WTC11 (cell line): ENCODE measurements at regions of chr9 and their contacts with region 1.

Region 1: DNA sequence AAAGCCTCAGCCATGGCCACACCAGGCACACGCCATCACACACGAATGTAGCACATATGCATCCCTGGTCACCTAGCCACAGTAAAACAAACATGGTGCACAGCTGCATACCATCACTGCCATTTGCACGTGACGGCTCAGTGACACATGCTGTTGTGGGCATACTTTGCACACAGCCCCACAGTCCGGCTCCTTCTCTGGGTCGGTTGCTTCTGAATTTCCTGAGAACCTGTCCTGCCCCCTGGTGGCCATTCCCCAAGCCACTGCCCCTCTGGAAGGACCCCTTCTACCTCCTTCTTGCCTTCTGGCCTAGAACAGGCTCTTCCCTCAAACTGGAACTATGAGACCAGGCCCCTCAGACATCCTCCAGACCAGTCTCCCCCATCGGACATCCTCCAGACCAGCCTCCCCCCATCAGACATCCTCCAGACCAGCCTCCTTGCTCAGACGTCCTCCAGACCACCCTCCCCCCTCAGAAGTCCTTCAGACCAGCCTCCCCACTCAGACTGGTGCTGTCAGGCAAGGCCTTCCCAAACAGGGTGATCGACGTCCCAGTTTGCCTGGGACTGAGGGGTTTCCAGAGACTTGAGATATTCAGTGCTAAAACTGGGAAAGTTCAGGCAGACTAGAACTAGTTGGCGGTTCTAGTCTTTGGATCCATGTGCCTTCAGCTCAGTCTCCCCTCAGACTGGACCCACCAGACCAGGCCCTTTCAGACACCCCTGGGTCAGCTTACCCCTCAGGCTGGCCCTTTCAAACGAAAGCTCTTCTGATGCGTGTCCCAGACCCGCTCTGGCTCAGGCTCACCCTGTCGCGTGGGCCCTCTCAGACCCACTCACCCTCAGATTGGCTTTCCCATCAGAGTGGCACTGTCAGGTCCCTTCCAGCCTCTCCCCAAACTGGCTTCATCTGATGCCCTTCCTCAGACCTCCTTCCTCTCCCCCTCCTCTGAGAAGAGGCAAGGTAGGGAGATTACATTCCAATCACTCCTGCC is 24.3 kb upstream of the ENHO start:
- DNase-seq: peak; percentile 91
- ATAC-seq: peak; percentile 75
- H3K4me3 Mint-ChIP-seq: no peak overlapping the region
- H3K27ac Mint-ChIP-seq: no peak overlapping the region; the same call in 1 of the 2 replicates
- H3K4me1 Mint-ChIP-seq: peaks cover 2% of the 10 kb centered on the region; the same call in 1 of the 2 replicates
- H3K27me3 Mint-ChIP-seq: no peaks in the 10 kb centered on the region; the same call in 1 of the 2 replicates
- CTCF ChIP-seq: peak; percentile 93

Region 2: DNA sequence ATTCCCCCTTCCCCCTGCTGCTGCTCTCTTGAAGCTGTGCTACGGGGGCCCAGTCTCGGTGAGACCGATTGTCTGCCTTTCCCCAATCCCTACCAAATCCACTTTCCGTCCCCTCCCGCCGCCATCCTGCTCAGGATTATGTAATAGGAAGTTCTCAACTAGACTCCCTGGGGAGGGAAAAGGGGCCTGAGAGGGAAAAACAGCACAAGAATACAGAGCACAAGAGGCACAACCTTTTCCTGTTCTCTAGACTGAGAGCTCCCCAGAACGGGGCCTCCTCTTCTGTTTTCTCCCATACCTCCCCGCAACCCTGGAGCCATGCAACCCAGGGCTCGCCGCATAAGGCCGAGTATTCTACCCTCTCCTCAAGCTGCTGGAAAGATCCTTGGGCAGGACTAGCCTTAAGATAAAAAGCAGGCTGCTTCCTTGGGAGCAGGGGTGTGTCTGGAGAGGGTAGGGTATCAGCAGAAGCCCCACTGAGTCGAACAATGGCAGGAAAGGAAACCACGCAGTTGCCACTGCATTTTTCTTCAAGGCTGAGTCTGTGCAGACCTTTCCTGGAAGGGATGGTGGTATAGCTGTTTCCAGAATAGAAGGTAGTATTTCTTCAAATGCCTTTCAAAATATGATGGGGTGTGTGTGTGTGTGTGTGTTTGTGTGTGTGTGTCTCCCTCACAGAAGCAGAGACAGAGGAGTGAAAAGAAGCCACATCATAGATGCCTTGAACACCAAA is 183.3 kb before region 1 on chr9:
- CTCF ChIA-PET with region 1: no interaction called
- POLR2A ChIA-PET with region 1: no interaction called
- DNase-seq: peak; percentile 28
- ATAC-seq: peak; percentile 87
- H3K4me3 Mint-ChIP-seq: peak overlapping the region; percentile 50
- H3K27ac Mint-ChIP-seq: peak overlapping the region; percentile 24; the same call in 1 of the 2 replicates
- H3K4me1 Mint-ChIP-seq: peaks cover 27% of the 10 kb centered on the region
- H3K27me3 Mint-ChIP-seq: no peaks in the 10 kb centered on the region
- CTCF ChIP-seq: no peak

Region 3: GRCh38 chr9:34493972-34494535 is 53.1 kb before region 1 on chr9:
- CTCF ChIA-PET with region 1: interaction called, 11 read pairs
- POLR2A ChIA-PET with region 1: no interaction called
- DNase-seq: peak; percentile 78
- ATAC-seq: peak; percentile 76
- H3K4me3 Mint-ChIP-seq: no peak overlapping the region
- H3K27ac Mint-ChIP-seq: no peak overlapping the region
- H3K4me1 Mint-ChIP-seq: peaks cover 4% of the 10 kb centered on the region; the same call in 1 of the 2 replicates
- H3K27me3 Mint-ChIP-seq: no peaks in the 10 kb centered on the region
- CTCF ChIP-seq: no peak

Region 4: GRCh38 chr9:34513567-34514214 is 33.4 kb before region 1 on chr9:
- CTCF ChIA-PET with region 1: interaction called, 34 read pairs
- POLR2A ChIA-PET with region 1: interaction called, 5 read pairs
- DNase-seq: peak; percentile 72
- ATAC-seq: peak; percentile 78
- H3K4me3 Mint-ChIP-seq: peak overlapping the region; percentile 43
- H3K27ac Mint-ChIP-seq: peak overlapping the region; percentile 96
- H3K4me1 Mint-ChIP-seq: peaks cover 59% of the 10 kb centered on the region
- H3K27me3 Mint-ChIP-seq: no peaks in the 10 kb centered on the region
- CTCF ChIP-seq: no peak

Region 5: DNA sequence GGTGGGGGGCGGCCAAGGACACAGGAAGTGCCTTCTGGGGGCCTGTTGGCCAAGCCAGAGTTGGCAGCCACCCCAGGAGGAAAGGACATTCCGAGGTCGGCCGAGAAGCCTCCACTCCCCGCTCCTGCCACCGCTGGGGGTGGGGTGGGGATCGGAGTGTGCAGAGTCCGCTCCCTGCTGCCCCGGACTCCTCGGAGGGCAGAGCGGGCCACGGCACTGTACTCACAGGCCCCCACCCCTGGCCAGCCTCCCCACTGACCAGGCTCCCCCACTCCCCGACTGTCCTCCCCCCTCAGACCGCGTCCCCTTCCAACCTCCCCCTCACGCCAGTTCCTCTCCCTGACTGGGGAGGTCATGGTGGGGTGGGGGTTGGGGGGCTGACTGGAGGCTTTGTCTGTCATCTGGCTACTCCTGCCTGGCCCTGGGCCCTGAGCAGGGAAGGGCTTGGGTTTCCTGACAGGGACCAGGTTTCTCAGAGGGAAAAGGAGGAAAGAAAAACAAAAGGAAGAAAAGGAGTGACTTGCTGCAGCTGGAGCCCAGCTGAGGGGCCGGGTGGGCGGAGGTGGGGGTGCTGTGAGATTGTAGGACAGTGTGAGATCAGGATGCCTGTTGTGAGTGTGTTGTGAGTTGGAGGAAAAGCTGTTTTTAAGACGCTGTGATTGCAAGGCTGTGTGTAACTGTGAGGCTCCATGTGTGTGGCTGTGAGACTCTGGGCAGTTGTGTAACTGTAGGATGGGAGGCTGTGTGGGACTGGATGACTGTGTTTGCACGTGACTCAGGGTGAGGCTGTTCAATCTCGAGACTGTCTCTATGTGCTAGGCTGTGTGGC is 12.7 kb after region 1 on chr9:
- CTCF ChIA-PET with region 1: interaction called, 19 read pairs
- POLR2A ChIA-PET with region 1: no interaction called
- DNase-seq: no peak
- ATAC-seq: peak; percentile 27
- H3K4me3 Mint-ChIP-seq: no peak overlapping the region
- H3K27ac Mint-ChIP-seq: peak overlapping the region; percentile 33; the same call in 1 of the 2 replicates
- H3K4me1 Mint-ChIP-seq: peaks cover 37% of the 10 kb centered on the region
- H3K27me3 Mint-ChIP-seq: peaks cover 4% of the 10 kb centered on the region
- CTCF ChIP-seq: no peak

Region 6: GRCh38 chr9:34578241-34579103 is 31.3 kb after region 1 on chr9:
- CTCF ChIA-PET with region 1: interaction called, 23 read pairs
- POLR2A ChIA-PET with region 1: interaction called, 5 read pairs
- DNase-seq: peak; percentile 56
- ATAC-seq: peak; percentile 25
- H3K4me3 Mint-ChIP-seq: peak overlapping the region; percentile 67
- H3K27ac Mint-ChIP-seq: no peak overlapping the region
- H3K4me1 Mint-ChIP-seq: peaks cover 48% of the 10 kb centered on the region
- H3K27me3 Mint-ChIP-seq: peaks cover 73% of the 10 kb centered on the region
- CTCF ChIP-seq: no peak

Region 7: GRCh38 chr9:34611829-34612630 is 64.9 kb after region 1 on chr9 and contains the start of gene RPP25L:
- CTCF ChIA-PET with region 1: interaction called, 83 read pairs
- POLR2A ChIA-PET with region 1: no interaction called
- DNase-seq: peak; percentile 83
- ATAC-seq: peak; percentile 86
- H3K4me3 Mint-ChIP-seq: peak within 1 kb of the TSS; percentile 82
- H3K27ac Mint-ChIP-seq: peak within 1 kb of the TSS; percentile 82
- H3K4me1 Mint-ChIP-seq: peaks cover 20% of the 10 kb centered on the region
- H3K27me3 Mint-ChIP-seq: peaks cover 11% of the 10 kb centered on the region
- CTCF ChIP-seq: no peak
- total RNA-seq, gene RPP25L: 24.5 to 35.9 TPM (median 31.4 TPM) in 3 replicates